Cardiac septum (tissue), 1 donor: ENCODE measurements at regions of chr1 and their contacts with region 1.

Region 1: GRCh38 chr1:184982002-184982954 is 8.0 kb upstream of the NIBAN1 start:
- DNase-seq: peak; percentile 90

Region 2: GRCh38 chr1:184805667-184806295 is 176.5 kb before region 1 on chr1:
- intact Hi-C with region 1: loop called (anchors 1 kb)
- DNase-seq: peak; percentile 95

Region 3: GRCh38 chr1:185170291-185170848 is 188.1 kb after region 1 on chr1:
- intact Hi-C with region 1: loop called (anchors 5 kb)
- DNase-seq: no peak